ENCODE measurements at regions of chr10 and their contacts with region 1.

Region 1: DNA sequence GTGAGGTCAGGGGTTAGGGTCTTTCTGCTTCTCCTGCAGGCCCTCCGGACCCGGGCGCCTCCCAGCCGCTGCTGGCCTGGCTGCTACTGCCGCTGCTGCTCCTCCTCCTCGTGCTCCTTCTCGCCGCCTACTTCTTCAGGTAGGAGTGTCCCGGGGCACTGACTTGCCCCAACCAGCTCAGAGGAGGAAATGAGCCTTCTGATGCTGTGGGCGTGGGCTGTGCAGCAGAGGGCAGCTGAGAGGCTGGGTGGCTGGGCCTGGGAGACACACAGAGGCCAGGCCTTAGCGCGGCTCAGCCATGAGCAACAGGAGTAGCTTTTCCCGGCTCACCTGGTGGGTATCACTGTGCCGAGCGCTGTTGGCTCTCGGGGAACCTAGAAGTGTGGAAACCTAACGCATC is 78.9 kb downstream of the MKI67 start:
- DNase-seq: peak; percentile 66 to 93 (median 78)
- ATAC-seq: peak; percentile 95
- H3K4me3 ChIP-seq: peak overlapping the region; percentile 67
- H3K4me3 Mint-ChIP-seq: peak overlapping the region; percentile 91
- H3K27ac ChIP-seq: peak overlapping the region; percentile 70 to 86
- H3K27ac Mint-ChIP-seq: peak overlapping the region; percentile 96
- H3K4me1 ChIP-seq: peaks cover 63% of the 10 kb centered on the region
- H3K4me1 Mint-ChIP-seq: peaks cover 49% of the 10 kb centered on the region
- H3K27me3 ChIP-seq: no peaks in the 10 kb centered on the region
- H3K27me3 Mint-ChIP-seq: no peaks in the 10 kb centered on the region
- CTCF ChIP-seq: no peak

Region 2: DNA sequence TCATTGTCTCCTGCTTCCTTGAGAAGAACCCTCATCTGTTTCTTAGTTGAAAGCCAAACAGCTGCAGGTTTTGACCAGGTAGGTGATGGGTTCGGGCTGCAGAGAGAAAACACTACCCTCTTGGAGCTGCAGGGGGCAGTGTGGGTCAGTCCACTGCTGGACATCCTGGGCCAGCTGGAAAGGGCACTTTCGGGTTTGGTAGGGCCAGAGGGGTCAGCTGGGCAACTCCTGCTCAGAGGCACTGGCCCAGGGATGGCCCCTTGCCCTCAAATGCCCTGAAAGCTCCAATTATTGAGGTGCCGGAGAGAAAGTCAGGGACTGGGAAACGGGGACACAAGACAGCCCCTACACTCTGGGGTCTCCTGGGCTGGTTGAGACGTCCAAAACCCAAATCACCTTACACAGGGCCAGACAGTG is 11.8 kb before region 1 on chr10:
- CTCF ChIA-PET with region 1: interaction called, 16 read pairs
- POLR2A ChIA-PET with region 1: interaction called, 8 read pairs
- intact Hi-C with region 1: no loop called
- DNase-seq: peak; percentile 41 to 81 (median 56)
- ATAC-seq: peak; percentile 73
- H3K4me3 ChIP-seq: no peak overlapping the region
- H3K4me3 Mint-ChIP-seq: no peak overlapping the region
- H3K27ac ChIP-seq: no peak overlapping the region
- H3K27ac Mint-ChIP-seq: no peak overlapping the region
- H3K4me1 ChIP-seq: peaks cover 5% of the 10 kb centered on the region
- H3K4me1 Mint-ChIP-seq: peaks cover 3% of the 10 kb centered on the region
- H3K27me3 ChIP-seq: no peaks in the 10 kb centered on the region
- H3K27me3 Mint-ChIP-seq: no peaks in the 10 kb centered on the region
- CTCF ChIP-seq: peak; percentile 78

Region 3: GRCh38 chr10:128064108-128064969 is 17.0 kb after region 1 on chr10:
- CTCF ChIA-PET with region 1: interaction called, 24 read pairs
- POLR2A ChIA-PET with region 1: interaction called, 112 read pairs
- intact Hi-C with region 1: loop called (anchors 1 to 2 kb)
- DNase-seq: peak in 13 of 14 experiments; percentile 37 to 87 (median 59)
- ATAC-seq: peak; percentile 72
- H3K4me3 ChIP-seq: peak overlapping the region; percentile 47
- H3K4me3 Mint-ChIP-seq: peak overlapping the region; percentile 42
- H3K27ac ChIP-seq: peak overlapping the region; percentile 56 to 90
- H3K27ac Mint-ChIP-seq: peak overlapping the region; percentile 84
- H3K4me1 ChIP-seq: peaks cover 70% of the 10 kb centered on the region
- H3K4me1 Mint-ChIP-seq: peaks cover 72% of the 10 kb centered on the region
- H3K27me3 ChIP-seq: no peaks in the 10 kb centered on the region
- H3K27me3 Mint-ChIP-seq: no peaks in the 10 kb centered on the region
- CTCF ChIP-seq: no peak

Region 4: GRCh38 chr10:128069351-128070051 is 22.1 kb after region 1 on chr10:
- CTCF ChIA-PET with region 1: interaction called, 14 read pairs
- POLR2A ChIA-PET with region 1: interaction called, 112 read pairs
- intact Hi-C with region 1: loop called in 1 of 2 experiments (anchors 1 kb)
- DNase-seq: peak; percentile 70 to 92 (median 78)
- ATAC-seq: peak; percentile 55
- H3K4me3 ChIP-seq: no peak overlapping the region
- H3K4me3 Mint-ChIP-seq: no peak overlapping the region
- H3K27ac ChIP-seq: no peak overlapping the region
- H3K27ac Mint-ChIP-seq: peak overlapping the region; percentile 59
- H3K4me1 ChIP-seq: peaks cover 44% of the 10 kb centered on the region
- H3K4me1 Mint-ChIP-seq: peaks cover 48% of the 10 kb centered on the region
- H3K27me3 ChIP-seq: no peaks in the 10 kb centered on the region
- H3K27me3 Mint-ChIP-seq: no peaks in the 10 kb centered on the region
- CTCF ChIP-seq: peak; percentile 90

Region 5: DNA sequence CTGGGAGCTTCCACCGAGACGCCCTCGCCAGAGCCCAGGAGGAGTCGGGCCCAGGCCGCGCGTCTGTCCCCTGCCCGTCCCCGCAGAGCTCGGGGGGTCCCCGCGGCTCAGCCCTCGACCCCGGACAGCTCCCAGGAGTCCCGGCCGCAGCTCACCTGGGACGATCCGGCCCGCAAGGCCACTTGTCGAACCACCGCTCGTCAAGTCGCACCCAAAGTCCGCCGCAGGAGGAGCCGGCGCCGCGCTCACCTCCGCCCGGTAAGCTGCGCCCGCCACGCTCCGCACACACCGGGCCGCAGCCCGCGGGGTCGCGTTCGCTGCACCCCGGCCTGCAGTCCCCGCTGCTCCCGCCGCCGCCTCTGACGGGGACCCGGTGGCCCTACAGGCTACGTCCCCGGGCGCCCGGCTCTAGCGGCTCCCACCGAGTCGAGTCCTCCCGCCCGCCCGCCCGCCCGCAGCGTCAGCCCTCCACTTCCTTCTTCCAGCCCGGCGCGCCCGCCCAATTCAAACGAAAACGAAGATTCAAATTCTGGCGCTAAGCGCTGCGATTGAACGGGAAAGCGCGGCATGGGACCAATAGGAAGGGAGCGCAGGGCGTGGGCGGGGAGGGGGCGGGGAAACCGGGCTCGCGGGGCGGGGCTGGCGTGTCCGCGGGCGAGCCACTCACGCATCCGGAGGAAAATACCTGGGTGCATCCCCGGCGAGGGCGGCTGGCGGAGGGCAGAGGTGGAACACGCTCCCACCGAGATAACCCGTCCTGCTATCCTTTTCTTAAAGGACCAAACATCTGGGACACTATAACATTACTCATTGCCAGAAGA is 78.8 kb after region 1 on chr10 and contains the start of gene MKI67:
- CTCF ChIA-PET with region 1: no interaction called
- POLR2A ChIA-PET with region 1: interaction called, 4 read pairs
- intact Hi-C with region 1: loop called in 1 of 2 experiments (anchors 1 kb)
- DNase-seq: peak; percentile 81 to 96 (median 84)
- ATAC-seq: peak; percentile 93
- H3K4me3 ChIP-seq: peak within 1 kb of the TSS; percentile 61
- H3K4me3 Mint-ChIP-seq: peak within 1 kb of the TSS; percentile 91
- H3K27ac ChIP-seq: no peak within 1 kb of the TSS
- H3K27ac Mint-ChIP-seq: peak within 1 kb of the TSS; percentile 16
- H3K4me1 ChIP-seq: peaks cover 20% of the 10 kb centered on the region
- H3K4me1 Mint-ChIP-seq: peaks cover 28% of the 10 kb centered on the region
- H3K27me3 ChIP-seq: peaks cover 16 to 28% of the 10 kb centered on the region in 2 experiments
- H3K27me3 Mint-ChIP-seq: peaks cover 41% of the 10 kb centered on the region
- CTCF ChIP-seq: no peak
- total RNA-seq, gene MKI67: 0.92 to 1.2 TPM

Region 6: DNA sequence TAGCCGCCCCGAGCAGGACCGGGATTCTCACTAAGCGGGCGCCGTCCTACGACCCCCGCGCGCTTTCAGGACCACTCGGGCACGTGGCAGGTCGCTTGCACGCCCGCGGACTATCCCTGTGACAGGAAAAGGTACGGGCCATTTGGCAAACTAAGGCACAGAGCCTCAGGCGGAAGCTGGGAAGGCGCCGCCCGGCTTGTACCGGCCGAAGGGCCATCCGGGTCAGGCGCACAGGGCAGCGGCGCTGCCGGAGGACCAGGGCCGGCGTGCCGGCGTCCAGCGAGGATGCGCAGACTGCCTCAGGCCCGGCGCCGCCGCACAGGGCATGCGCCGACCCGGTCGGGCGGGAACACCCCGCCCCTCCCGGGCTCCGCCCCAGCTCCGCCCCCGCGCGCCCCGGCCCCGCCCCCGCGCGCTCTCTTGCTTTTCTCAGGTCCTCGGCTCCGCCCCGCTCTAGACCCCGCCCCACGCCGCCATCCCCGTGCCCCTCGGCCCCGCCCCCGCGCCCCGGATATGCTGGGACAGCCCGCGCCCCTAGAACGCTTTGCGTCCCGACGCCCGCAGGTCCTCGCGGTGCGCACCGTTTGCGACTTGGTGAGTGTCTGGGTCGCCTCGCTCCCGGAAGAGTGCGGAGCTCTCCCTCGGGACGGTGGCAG is 1419.5 kb after region 1 on chr10 and contains the start of gene MGMT:
- CTCF ChIA-PET with region 1: no interaction called
- POLR2A ChIA-PET with region 1: no interaction called
- intact Hi-C with region 1: loop called in 1 of 2 experiments (anchors 10 kb)
- DNase-seq: peak; percentile 95 to 100 (median 99)
- ATAC-seq: peak; percentile 98
- H3K4me3 ChIP-seq: peak within 1 kb of the TSS; percentile 78
- H3K4me3 Mint-ChIP-seq: peak within 1 kb of the TSS; percentile 93
- H3K27ac ChIP-seq: peak within 1 kb of the TSS; percentile 58
- H3K27ac Mint-ChIP-seq: peak within 1 kb of the TSS; percentile 90
- H3K4me1 ChIP-seq: peaks cover 21% of the 10 kb centered on the region
- H3K4me1 Mint-ChIP-seq: peaks cover 22% of the 10 kb centered on the region
- H3K27me3 ChIP-seq: no peaks in the 10 kb centered on the region
- H3K27me3 Mint-ChIP-seq: no peaks in the 10 kb centered on the region
- CTCF ChIP-seq: no peak
- total RNA-seq, gene MGMT: 9.0 to 9.6 TPM